A673 (cell line): ENCODE measurements at regions of chr12 and their contacts with region 1.

Region 1: GRCh38 chr12:104314242-104314614 is 10.7 kb downstream of the EID3 start:
- DNase-seq: no peak
- H3K4me3 ChIP-seq: no peak overlapping the region
- H3K27ac ChIP-seq: no peak overlapping the region
- H3K4me1 ChIP-seq: peaks cover 8% of the 10 kb centered on the region
- H3K27me3 ChIP-seq: no peaks in the 10 kb centered on the region
- CTCF ChIP-seq: no peak

Region 2: GRCh38 chr12:103947871-103948555 is 366.2 kb before region 1 on chr12:
- CTCF ChIA-PET with region 1: no interaction called
- POLR2A ChIA-PET with region 1: no interaction called
- intact Hi-C with region 1: loop called (anchors 10 kb)
- DNase-seq: no peak
- H3K4me3 ChIP-seq: no peak overlapping the region
- H3K27ac ChIP-seq: peak overlapping the region; percentile 5
- H3K4me1 ChIP-seq: no peaks in the 10 kb centered on the region
- H3K27me3 ChIP-seq: no peaks in the 10 kb centered on the region
- CTCF ChIP-seq: no peak

Region 3: DNA sequence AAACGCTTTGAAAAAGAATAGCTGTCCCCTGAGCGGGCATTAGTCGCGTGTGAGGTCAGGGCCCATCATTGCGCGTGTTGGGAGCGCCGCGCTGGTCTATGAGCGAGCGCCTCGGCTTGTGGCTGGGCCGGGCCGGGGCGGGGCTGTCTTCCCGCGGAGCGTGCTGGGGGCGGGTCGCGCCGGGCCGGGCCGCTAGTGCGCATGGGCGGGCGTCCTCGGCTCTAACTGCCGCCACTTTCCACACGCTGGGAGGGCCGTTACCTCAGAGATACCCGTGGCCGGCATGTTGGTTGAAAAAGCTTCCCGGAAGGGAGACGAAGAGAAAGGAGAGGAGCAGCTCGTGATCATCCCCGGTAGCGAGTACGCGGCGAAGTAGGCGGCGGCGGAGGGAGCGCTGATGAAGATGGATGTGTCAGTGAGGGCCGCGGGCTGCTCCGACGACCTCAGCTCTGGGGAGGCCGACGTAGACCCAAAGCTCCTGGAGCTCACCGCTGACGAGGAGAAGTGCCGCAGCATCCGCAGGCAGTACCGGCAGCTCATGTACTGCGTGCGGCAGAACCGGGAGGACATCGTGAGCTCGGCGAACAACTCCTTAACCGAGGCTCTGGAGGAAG is 10.6 kb before region 1 on chr12 and contains the start of gene EID3:
- CTCF ChIA-PET with region 1: no interaction called
- POLR2A ChIA-PET with region 1: interaction called, 13 read pairs
- intact Hi-C with region 1: no loop called
- DNase-seq: peak; percentile 62
- H3K4me3 ChIP-seq: peak within 1 kb of the TSS; percentile 15
- H3K27ac ChIP-seq: peak within 1 kb of the TSS; percentile 15
- H3K4me1 ChIP-seq: peaks cover 59% of the 10 kb centered on the region
- H3K27me3 ChIP-seq: no peaks in the 10 kb centered on the region
- CTCF ChIP-seq: no peak
- total RNA-seq, gene EID3: 3.0 and 5.4 TPM in 2 replicates